ENCODE measurements at regions of chr6 and their contacts with region 1.

Region 1: GRCh38 chr6:116779573-116780164 is 14.2 kb upstream of the FAM162B start:
- DNase-seq: no peak
- H3K4me3 ChIP-seq: no peak overlapping the region
- H3K27ac ChIP-seq: no peak overlapping the region
- H3K4me1 ChIP-seq: no peaks in the 10 kb centered on the region
- H3K27me3 ChIP-seq: no peaks in the 10 kb centered on the region
- CTCF ChIP-seq: no peak

Region 2: DNA sequence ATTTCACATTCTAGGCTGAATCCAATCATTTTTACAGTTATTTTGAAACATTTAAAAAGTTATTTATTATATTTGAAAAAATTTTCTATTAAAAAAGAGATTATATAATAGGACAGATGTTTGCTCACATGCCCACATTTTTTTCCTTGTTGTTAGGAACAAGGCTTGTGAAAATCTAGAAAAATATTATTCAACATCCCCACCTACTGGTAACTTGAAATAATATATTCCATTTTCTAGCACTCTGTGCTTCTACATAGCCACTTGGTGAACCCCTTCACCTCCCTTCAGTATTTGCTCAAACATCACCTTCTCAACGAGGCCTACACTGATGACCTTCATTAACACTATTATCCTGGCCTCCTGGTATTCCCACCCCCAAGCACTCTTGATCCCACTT is 67.6 kb after region 1 on chr6:
- intact Hi-C with region 1: loop called (anchors 5 kb)
- DNase-seq: no peak
- H3K4me3 ChIP-seq: no peak overlapping the region
- H3K27ac ChIP-seq: no peak overlapping the region
- H3K4me1 ChIP-seq: no peaks in the 10 kb centered on the region
- H3K27me3 ChIP-seq: no peaks in the 10 kb centered on the region
- CTCF ChIP-seq: no peak